ENCODE measurements at regions of chr4 and their contacts with region 1.

Region 1: GRCh38 chr4:113761620-113762185 is at the start of gene CAMK2D:
- DNase-seq: peak; percentile 82
- ATAC-seq: peak; percentile 75 to 83
- total RNA-seq, gene CAMK2D: 133 to 136 TPM

Region 2: DNA sequence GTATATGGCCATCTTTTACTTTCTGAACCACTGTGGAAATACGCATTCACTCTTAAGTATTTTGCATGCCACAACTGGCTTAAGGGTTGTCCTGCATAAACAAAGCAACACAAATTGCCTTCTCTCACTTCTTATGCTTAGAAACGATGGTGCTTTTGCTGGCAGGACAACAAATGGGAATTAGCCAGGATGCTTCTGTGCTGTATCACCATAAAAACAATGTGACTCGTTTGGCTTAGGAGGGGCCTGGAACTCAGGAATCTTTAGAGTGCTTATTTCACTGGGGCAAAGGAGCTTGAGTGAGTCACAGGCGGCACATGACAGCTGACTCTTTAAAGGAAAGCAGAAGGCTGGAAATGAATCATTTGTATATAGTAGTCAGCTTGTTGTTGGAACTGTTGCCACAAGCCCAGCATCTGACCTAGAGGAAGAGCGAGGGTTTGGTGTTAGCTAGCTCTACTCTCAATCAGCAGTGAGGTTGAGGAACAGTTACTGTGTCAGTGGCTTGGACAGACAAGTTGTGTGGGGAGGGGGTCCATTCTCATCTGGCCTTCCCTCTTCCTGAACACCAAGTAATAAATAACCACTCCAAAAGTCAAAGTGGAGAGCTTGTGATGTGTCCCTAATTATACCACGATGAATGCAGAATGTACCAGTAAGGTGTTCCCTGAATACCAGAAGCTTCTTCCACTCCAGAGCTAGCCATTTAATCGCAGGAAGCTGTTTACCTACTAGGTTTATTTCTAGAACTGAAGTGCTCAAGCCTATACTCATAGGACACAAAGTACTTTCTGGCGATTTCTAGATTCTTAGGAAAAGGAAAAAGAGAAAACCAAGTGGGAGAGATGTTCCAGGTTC is 293.3 kb before region 1 on chr4:
- intact Hi-C with region 1: loop called in 1 of 2 experiments (anchors 5 kb)
- DNase-seq: peak; percentile 85
- ATAC-seq: peak; percentile 93 to 97